ENCODE measurements at regions of chr9 and their contacts with region 1.

Region 1: DNA sequence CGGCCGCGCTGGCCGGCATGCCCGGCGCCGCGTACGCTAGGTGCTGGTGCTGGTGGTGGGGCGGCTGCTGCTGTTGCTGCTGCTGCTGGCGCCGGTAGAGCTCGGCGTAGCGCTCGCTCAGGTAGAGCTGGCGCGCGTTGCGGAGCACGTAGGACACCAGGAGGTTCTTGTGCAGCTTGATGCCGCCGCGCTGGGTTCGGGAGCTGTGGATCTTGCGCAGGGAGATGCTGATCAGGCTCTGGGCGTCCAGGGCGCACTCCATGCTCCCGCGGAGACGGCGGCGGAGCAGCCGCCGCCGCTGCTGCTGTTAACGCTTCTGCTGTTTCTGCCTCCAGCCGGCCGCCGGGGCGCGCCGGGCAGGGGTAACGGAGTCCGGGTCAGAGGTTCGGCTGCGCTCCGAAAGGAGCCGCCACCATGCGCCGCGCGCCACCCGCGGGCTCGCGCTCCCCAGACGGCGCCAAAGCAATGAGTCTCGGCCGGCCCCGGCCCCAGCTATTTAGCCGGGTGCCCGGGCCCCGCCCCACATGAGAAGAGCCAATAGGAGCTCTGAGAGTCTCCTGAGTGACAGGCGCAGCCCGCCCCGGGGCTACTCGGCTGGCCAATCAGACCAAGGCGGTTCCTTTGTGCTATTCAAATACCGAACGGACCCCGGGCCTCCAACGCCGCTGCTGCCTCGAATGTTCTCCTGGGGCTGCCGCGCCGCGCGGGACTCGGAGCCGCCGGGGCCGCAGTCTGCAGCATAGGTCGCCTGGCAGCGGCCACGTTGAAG is at the start of gene IER5L:
- DNase-seq: peak; percentile 99
- H3K4me3 Mint-ChIP-seq: peak within 1 kb of the TSS; percentile 92
- H3K27ac Mint-ChIP-seq: peak within 1 kb of the TSS; percentile 89
- H3K4me1 Mint-ChIP-seq: peaks cover 11% of the 10 kb centered on the region
- H3K27me3 Mint-ChIP-seq: peaks cover 10% of the 10 kb centered on the region
- total RNA-seq, gene IER5L: 11.7 and 12.2 TPM in 2 replicates

Region 2: DNA sequence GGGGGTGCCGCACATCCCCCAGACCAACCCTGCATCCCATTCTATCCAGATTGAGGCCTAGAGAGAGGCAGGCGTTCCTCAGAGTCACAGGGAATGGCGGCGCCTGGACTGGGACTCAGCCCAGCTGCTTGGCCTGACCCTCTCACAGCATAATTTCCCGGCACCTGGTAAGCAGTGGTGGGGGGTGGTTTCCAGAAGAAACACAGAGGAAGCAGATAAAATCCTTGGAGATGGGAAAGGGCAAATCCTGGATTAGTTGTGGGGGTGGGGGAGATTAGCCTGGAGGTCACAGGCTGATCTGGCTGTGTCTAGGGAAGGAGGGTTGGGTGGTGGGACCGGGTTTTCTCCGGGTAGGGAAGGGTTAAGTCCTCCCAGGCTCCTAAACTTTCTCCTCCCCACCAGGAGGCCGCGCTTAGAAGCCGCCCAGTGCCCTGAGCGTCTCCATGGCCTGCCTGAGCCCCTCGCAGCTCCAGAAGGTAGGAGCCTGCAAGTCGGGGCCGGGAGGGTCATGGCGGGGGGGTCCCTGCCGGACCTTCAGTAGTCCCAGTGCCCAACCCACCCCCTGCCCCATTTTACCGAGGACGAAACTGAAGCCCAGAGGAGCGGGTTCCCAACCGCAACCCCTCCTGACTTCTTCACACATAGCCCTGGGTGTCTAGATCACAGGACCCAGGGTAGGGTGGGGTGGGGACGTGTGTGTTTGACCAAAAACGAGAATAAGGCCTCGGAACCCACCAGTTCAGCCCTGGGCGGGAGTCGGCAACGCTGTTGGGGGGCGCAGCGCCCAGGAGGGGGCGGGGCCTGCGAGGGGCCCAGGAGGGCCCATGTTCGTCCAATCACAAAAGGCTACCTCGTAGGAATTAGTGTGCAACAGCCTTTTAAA is 255.9 kb before region 1 on chr9:
- intact Hi-C with region 1: no loop called
- DNase-seq: no peak
- H3K4me3 Mint-ChIP-seq: no peak overlapping the region
- H3K27ac Mint-ChIP-seq: no peak overlapping the region
- H3K4me1 Mint-ChIP-seq: peaks cover 6% of the 10 kb centered on the region
- H3K27me3 Mint-ChIP-seq: no peaks in the 10 kb centered on the region

Region 3: GRCh38 chr9:129164246-129164930 is 13.6 kb before region 1 on chr9:
- intact Hi-C with region 1: no loop called
- DNase-seq: no peak
- H3K4me3 Mint-ChIP-seq: no peak overlapping the region
- H3K27ac Mint-ChIP-seq: no peak overlapping the region
- H3K4me1 Mint-ChIP-seq: peaks cover 13% of the 10 kb centered on the region
- H3K27me3 Mint-ChIP-seq: no peaks in the 10 kb centered on the region

Region 4: DNA sequence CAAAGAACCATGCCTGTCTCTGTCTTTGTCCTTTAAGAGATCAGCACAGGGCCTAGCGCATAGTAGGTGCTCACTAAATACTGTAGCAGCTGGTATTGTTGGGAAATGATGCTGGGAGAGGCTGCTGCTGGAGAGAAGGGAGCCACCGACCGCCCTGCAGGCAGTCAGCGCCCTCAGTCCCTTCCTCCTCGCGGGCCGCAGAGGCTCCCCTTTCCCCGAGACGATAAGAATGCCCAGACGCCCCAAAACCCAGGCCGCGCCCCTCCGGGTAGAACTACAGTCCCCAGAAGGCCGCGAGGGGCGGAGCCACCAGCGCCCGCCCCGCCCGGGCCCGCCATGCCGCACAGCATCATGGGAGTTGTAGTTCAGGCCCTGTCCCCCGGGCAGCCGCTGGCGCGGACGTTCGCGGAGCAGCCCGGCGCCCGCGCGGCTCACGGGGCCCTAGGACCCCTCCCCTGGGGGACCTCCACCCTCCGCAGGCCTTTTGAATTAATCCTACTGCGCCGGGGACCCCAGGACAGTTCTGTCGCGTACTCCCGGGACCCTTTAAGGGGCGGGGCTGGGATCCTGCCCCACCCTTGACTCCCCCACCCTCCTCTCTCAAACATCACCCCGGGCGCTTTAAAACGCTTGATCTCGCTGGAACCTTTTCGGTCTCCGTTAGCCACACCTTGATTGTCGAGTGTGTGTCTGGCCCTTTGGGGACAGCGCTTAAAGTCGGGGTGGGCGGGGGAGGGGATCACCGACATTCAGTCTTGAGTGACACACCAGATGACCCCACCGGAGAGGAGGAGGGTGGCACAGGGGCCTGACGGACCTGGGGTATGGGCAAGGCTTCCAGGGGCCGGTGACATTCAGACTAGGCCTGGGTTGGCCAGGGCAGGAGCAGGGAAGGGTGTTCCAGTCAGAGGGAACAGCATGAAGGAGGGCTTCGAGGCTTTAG is 24.9 kb after region 1 on chr9:
- intact Hi-C with region 1: loop called (anchors 1 kb)
- DNase-seq: peak; percentile 98
- H3K4me3 Mint-ChIP-seq: peak overlapping the region; percentile 80
- H3K27ac Mint-ChIP-seq: peak overlapping the region; percentile 83
- H3K4me1 Mint-ChIP-seq: peaks cover 11% of the 10 kb centered on the region
- H3K27me3 Mint-ChIP-seq: peaks cover 6% of the 10 kb centered on the region

Region 5: DNA sequence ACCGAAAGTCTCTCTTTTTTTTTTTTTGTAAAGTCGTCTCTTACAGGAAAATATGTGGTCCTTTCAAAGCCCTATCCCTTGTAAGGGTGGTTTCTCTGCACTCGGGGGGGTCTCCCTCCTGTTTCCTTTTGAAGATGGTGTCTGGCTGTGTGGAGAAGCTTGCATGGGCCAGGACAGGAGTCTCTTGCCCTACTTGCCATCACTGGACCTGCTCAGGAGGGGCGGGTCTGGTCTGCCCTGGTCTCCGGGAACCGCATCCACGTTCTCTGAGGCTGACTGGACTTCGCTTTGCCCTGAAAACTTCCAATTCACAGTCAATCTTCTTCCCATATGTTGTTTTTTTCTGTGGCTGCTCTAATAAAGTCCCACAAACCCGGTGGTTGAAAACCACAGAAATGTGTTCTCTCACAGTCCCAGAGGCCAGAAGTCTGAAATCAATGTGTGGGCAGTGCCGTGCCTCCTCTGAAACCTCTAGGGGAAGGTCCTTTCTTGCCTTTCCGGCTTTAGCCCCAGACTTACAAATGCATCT is 93.0 kb after region 1 on chr9:
- intact Hi-C with region 1: loop called (anchors 1 kb)
- DNase-seq: peak; percentile 70
- H3K4me3 Mint-ChIP-seq: peak overlapping the region; percentile 60
- H3K27ac Mint-ChIP-seq: peak overlapping the region; percentile 71
- H3K4me1 Mint-ChIP-seq: peaks cover 28% of the 10 kb centered on the region
- H3K27me3 Mint-ChIP-seq: peaks cover 19% of the 10 kb centered on the region

Region 6: GRCh38 chr9:129413537-129414376 is 235.8 kb after region 1 on chr9:
- intact Hi-C with region 1: loop called (anchors 1 kb)
- DNase-seq: peak; percentile 99
- H3K4me3 Mint-ChIP-seq: peak overlapping the region; percentile 86
- H3K27ac Mint-ChIP-seq: peak overlapping the region; percentile 98
- H3K4me1 Mint-ChIP-seq: peaks cover 19% of the 10 kb centered on the region
- H3K27me3 Mint-ChIP-seq: no peaks in the 10 kb centered on the region

Region 7: GRCh38 chr9:129610473-129611301 is 432.7 kb after region 1 on chr9:
- intact Hi-C with region 1: loop called (anchors 1 kb)
- DNase-seq: peak; percentile 92
- H3K4me3 Mint-ChIP-seq: peak overlapping the region; percentile 84
- H3K27ac Mint-ChIP-seq: peak overlapping the region; percentile 89
- H3K4me1 Mint-ChIP-seq: peaks cover 35% of the 10 kb centered on the region
- H3K27me3 Mint-ChIP-seq: peaks cover 5% of the 10 kb centered on the region